ENCODE measurements at regions of chr10 and their contacts with region 1.

Region 1: DNA sequence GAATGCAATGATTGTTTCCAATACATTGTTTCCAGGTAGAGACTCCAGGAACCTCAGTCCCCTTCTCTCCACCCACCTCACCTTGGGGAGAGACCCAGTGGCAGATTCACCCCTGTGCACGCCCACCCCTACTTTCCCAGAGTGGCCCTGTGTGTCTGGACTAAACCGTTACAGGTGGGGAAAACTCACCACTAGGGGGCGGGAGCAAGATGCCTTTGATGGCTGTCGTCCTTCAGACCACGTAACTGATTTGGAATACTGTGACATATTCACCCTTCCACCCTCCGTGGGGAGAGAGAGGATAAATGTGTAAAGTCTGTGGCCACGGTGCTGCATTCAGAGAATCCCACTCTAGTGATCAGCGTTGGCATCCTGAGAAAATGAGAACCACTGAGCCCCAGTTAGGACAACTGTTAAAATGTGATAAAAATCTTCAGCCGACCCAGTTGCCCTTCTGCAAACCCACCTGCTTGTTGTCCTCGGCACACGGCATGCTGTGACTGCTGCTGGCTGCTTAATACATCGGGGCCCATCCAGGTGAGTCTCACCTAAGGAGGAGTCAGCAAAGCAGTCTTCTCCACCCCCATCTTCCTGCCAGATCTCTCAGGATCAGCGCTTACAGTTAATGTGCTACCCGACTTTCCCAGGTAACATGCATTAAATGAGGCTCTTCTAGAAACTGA is 41.5 kb upstream of the NMT2 start:
- DNase-seq: peak; percentile 77 to 87 (median 81)
- ATAC-seq: peak; percentile 63 to 91 (median 87)
- H3K4me3 ChIP-seq: no peak overlapping the region
- H3K27ac ChIP-seq: no peak overlapping the region
- H3K4me1 ChIP-seq: peaks cover 0 to 17% (median 4%) of the 10 kb centered on the region in 12 donors
- H3K27me3 ChIP-seq: no peaks in the 10 kb centered on the region
- CTCF ChIP-seq: peak; percentile 72 to 92 (median 83)
- POLR2A ChIP-seq: no peak

Region 2: GRCh38 chr10:15168781-15169554 is 41.0 kb before region 1 on chr10:
- intact Hi-C with region 1: no loop called
- DNase-seq: peak; percentile 96 to 98 (median 98)
- ATAC-seq: peak; percentile 88 to 96 (median 92)
- H3K4me3 ChIP-seq: peak overlapping the region in 9 of 12 donors; percentile 11 to 64 (median 32)
- H3K27ac ChIP-seq: peak overlapping the region in 11 of 12 donors; percentile 4 to 82 (median 66)
- H3K4me1 ChIP-seq: peaks cover 3 to 38% (median 25%) of the 10 kb centered on the region in 12 donors
- H3K27me3 ChIP-seq: no peaks in the 10 kb centered on the region
- CTCF ChIP-seq: no peak
- POLR2A ChIP-seq: peak in 1 of 2 donors; percentile 73

Region 3: GRCh38 chr10:15325243-15325943 is 115.4 kb after region 1 on chr10:
- intact Hi-C with region 1: no loop called
- DNase-seq: peak; percentile 37 to 69 (median 54)
- ATAC-seq: peak in 3 of 4 donors; percentile 62 to 86 (median 79)
- H3K4me3 ChIP-seq: no peak overlapping the region
- H3K27ac ChIP-seq: peak overlapping the region in 10 of 12 donors; percentile 13 to 62 (median 40)
- H3K4me1 ChIP-seq: peaks cover 0 to 34% (median 14%) of the 10 kb centered on the region in 12 donors
- H3K27me3 ChIP-seq: no peaks in the 10 kb centered on the region
- CTCF ChIP-seq: no peak
- POLR2A ChIP-seq: no peak

Region 4: DNA sequence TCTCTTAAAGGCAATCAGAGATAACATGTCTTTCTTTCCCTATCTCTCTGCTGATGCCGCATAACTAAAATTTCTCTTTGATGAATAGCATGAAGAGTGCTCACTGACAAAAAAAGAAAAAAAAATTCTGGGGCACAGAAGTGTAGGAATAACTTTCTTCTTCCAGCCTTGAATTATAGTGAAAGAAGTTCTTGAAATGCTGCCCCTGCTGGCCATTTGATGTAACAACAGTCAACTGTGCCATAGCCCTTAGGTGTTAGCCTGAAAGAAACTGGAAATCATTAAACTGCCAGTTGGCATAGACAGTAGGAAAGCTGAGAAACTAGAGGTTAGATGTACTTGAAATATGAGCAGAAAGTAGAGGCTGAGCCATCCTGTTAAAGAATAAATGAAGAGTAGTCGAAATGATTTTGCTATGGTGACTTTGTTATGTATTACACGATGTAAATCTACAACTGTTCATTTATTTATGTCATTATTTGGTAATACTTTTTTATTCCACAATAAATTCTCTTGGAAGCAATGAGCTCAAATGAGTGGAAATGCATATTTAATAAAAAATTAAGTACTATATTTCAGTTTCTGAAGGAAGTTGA is 209.4 kb after region 1 on chr10:
- intact Hi-C with region 1: loop called in 2 of 10 experiments (anchors 5 kb)
- DNase-seq: no peak
- ATAC-seq: peak in 1 of 4 donors; percentile 41
- H3K4me3 ChIP-seq: no peak overlapping the region
- H3K27ac ChIP-seq: no peak overlapping the region
- H3K4me1 ChIP-seq: no peaks in the 10 kb centered on the region
- H3K27me3 ChIP-seq: no peaks in the 10 kb centered on the region
- CTCF ChIP-seq: peak; percentile 74 to 96 (median 86)
- POLR2A ChIP-seq: no peak